T-cell (primary cell): ENCODE measurements at regions of chr20 and their contacts with region 1.

Region 1: GRCh38 chr20:1734269-1734858 is 76.8 kb upstream of the SIRPG start:
- DNase-seq: peak in 18 of 35 experiments; percentile 7 to 73 (median 16)
- ATAC-seq: peak; percentile 76 to 82 (median 78)
- H3K4me3 ChIP-seq: no peak overlapping the region
- H3K4me3 Mint-ChIP-seq: no peak overlapping the region
- H3K27ac ChIP-seq: no peak overlapping the region
- H3K27ac Mint-ChIP-seq: peak overlapping the region; percentile 38 to 68
- H3K4me1 ChIP-seq: peaks cover 7 to 16% of the 10 kb centered on the region in 2 experiments
- H3K4me1 Mint-ChIP-seq: peaks cover 5 to 10% (median 8%) of the 10 kb centered on the region in 3 donors
- H3K27me3 ChIP-seq: no peaks in the 10 kb centered on the region
- H3K27me3 Mint-ChIP-seq: no peaks in the 10 kb centered on the region

Region 2: DNA sequence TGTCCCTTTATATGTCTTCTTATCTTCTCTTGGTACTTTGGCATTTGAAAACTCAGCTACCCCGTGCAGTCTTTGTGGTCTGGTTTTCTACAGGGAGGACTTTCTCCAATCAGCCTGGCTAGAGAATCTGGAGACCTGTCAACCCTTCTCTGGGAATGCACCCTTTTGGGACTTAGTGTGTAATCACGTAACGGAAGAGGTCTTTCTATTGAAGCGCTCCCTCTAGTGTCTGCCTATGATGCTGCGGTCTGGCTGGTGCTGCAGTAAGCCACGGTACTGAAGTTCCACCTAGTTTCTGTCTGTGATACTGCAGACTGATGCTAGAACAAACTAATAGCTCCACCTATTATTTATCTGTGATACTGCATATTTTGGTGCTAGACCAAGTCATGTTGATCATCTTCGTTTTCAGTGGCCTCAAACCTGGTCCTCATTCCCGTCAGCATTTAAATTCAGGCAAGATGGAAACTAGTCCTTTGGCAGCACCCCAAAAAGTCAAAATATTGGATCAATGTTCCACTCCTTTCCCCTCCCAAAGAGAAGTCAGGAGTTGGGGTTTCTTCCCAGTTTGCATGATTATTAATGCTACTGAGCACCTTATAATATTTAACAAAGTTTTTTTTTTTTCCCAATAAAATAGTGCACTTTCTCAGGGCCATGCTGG is 230.7 kb before region 1 on chr20:
- CTCF ChIA-PET with region 1: interaction called, 5 to 11 read pairs
- POLR2A ChIA-PET with region 1: no interaction called
- DNase-seq: peak; percentile 38 to 90 (median 71)
- ATAC-seq: peak; percentile 99 to 100 (median 100)
- H3K4me3 ChIP-seq: no peak overlapping the region
- H3K4me3 Mint-ChIP-seq: no peak overlapping the region
- H3K27ac ChIP-seq: no peak overlapping the region
- H3K27ac Mint-ChIP-seq: no peak overlapping the region
- H3K4me1 ChIP-seq: no peaks in the 10 kb centered on the region
- H3K4me1 Mint-ChIP-seq: peaks cover 3 to 6% (median 4%) of the 10 kb centered on the region in 3 donors
- H3K27me3 ChIP-seq: peaks cover 0 to 18% of the 10 kb centered on the region in 2 experiments
- H3K27me3 Mint-ChIP-seq: peaks cover 30 to 40% of the 10 kb centered on the region in 2 donors

Region 3: GRCh38 chr20:1555952-1556351 is 178.4 kb before region 1 on chr20:
- CTCF ChIA-PET with region 1: interaction called, 3 to 11 read pairs
- POLR2A ChIA-PET with region 1: no interaction called
- DNase-seq: peak in 2 of 35 experiments; percentile 6 to 54
- ATAC-seq: peak in 3 of 4 experiments; percentile 62 to 68 (median 63)
- H3K4me3 ChIP-seq: no peak overlapping the region
- H3K4me3 Mint-ChIP-seq: no peak overlapping the region
- H3K27ac ChIP-seq: no peak overlapping the region
- H3K27ac Mint-ChIP-seq: peak overlapping the region in 1 of 2 donors; percentile 41
- H3K4me1 ChIP-seq: no peaks in the 10 kb centered on the region
- H3K4me1 Mint-ChIP-seq: peaks cover 7 to 10% (median 8%) of the 10 kb centered on the region in 3 donors
- H3K27me3 ChIP-seq: no peaks in the 10 kb centered on the region
- H3K27me3 Mint-ChIP-seq: peaks cover 0 to 3% of the 10 kb centered on the region in 2 donors

Region 4: GRCh38 chr20:1636621-1637020 is 97.7 kb before region 1 on chr20:
- CTCF ChIA-PET with region 1: no interaction called
- POLR2A ChIA-PET with region 1: no interaction called
- DNase-seq: no peak
- ATAC-seq: no peak
- H3K4me3 ChIP-seq: no peak overlapping the region
- H3K4me3 Mint-ChIP-seq: no peak overlapping the region
- H3K27ac ChIP-seq: no peak overlapping the region
- H3K27ac Mint-ChIP-seq: peak overlapping the region; percentile 63 to 83
- H3K4me1 ChIP-seq: peaks cover 0 to 14% of the 10 kb centered on the region in 2 experiments
- H3K4me1 Mint-ChIP-seq: peaks cover 36 to 60% (median 53%) of the 10 kb centered on the region in 3 donors
- H3K27me3 ChIP-seq: no peaks in the 10 kb centered on the region
- H3K27me3 Mint-ChIP-seq: no peaks in the 10 kb centered on the region